ENCODE measurements at regions of chr9 and their contacts with region 1.

Region 1: GRCh38 chr9:91978739-91979414 is 28.8 kb upstream of the ROR2 start:
- DNase-seq: no peak
- ATAC-seq: no peak
- H3K4me3 ChIP-seq: no peak overlapping the region
- H3K27ac ChIP-seq: no peak overlapping the region
- H3K4me1 ChIP-seq: no peaks in the 10 kb centered on the region
- H3K27me3 ChIP-seq: no peaks in the 10 kb centered on the region

Region 2: GRCh38 chr9:91775011-91775707 is 203.7 kb before region 1 on chr9:
- intact Hi-C with region 1: loop called in 1 of 2 experiments (anchors 10 kb)
- DNase-seq: peak in 1 of 2 donors; percentile 63
- ATAC-seq: peak; percentile 55
- H3K4me3 ChIP-seq: no peak overlapping the region
- H3K27ac ChIP-seq: no peak overlapping the region
- H3K4me1 ChIP-seq: no peaks in the 10 kb centered on the region
- H3K27me3 ChIP-seq: no peaks in the 10 kb centered on the region

Region 3: DNA sequence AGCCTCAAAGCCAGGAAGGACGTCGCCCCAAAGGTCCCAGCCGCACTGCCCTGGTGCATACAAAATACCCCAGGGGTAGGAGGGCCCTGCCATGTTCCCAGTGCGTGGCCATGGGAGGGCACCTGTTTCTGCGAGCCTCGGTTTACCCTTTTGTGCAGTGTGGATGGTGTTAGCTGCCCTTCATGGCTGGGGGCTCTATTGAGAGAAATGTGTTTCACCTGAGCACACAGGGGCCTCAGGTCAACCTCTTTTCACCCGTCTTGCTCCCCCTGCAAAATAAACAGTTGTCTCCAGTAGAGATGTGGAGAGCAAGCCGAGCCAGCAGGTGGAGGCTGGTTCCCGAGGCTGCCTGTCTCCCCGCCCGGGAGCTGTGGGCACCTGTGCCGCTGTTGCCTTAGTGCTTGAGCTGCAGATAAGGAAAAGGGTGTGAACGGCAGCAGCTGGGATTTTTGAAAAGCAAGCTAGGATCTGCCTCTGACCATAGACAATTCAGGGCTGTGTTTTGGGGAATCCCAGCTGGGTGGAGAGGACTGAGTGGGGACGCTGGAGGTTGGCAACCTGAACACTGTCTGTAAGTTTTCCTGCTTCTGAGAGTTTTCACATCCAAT is 1214.4 kb after region 1 on chr9:
- intact Hi-C with region 1: no loop called
- DNase-seq: no peak
- ATAC-seq: no peak
- H3K4me3 ChIP-seq: no peak overlapping the region
- H3K27ac ChIP-seq: no peak overlapping the region
- H3K4me1 ChIP-seq: no peaks in the 10 kb centered on the region
- H3K27me3 ChIP-seq: no peaks in the 10 kb centered on the region

Measured in aorta (tissue), 5 donors.